Activated CD8-positive, alpha-beta memory T cell treated with anti-CD3 and anti-CD28 coated beads, Interleukin-2, amount 10 ng/mL, durations not matched to agents 7 days and 5 days (primary cell): ENCODE measurements at regions of chr18 and their contacts with region 1.

Region 1: DNA sequence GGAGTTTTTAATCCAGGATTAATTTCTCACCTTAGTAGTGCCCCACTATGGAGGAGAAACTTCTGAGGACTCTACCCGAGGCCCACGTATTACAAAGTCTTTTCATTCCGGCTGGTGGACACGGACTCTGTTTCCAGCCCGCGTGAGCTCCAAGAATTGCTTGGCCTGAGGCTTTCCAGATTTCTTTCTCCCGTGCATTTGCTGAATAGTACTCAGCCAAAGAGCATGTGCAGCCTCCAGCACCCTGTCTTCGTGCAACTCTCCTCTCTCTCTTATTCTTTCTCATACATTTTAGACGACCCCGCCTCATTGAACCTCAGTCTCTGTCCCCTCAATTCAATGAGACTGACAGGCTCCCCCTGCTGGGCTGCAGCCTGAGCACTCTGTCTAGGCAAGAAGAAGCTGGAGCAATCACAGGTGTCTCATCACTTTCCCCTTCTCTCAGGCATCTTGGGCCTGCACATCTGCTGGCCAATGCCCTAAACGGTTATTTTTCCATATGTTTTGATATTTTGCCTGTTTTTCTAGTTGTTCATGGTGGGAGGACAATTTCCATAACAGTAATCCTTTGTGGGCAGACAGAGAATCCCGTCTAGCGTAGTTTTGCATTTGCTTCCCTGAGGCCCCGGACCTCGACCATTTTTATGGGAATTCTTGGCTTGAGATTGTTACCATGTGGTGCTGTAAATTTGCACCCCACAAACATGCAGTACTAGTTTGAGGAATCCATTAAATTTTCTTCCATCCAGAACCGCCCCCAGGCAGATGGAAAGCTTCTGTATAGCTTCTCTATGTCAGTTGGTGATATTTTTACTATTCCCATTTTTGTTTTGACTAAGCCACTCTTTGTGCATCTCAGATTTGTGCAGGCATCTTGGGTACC is 50.1 kb upstream of the LPIN2 start:
- DNase-seq: peak; percentile 88
- ATAC-seq: peak; percentile 45
- H3K4me3 Mint-ChIP-seq: peak overlapping the region; percentile 62
- H3K27ac Mint-ChIP-seq: peak overlapping the region; percentile 100
- H3K4me1 Mint-ChIP-seq: peaks cover 72% of the 10 kb centered on the region
- H3K27me3 Mint-ChIP-seq: no peaks in the 10 kb centered on the region

Region 2: DNA sequence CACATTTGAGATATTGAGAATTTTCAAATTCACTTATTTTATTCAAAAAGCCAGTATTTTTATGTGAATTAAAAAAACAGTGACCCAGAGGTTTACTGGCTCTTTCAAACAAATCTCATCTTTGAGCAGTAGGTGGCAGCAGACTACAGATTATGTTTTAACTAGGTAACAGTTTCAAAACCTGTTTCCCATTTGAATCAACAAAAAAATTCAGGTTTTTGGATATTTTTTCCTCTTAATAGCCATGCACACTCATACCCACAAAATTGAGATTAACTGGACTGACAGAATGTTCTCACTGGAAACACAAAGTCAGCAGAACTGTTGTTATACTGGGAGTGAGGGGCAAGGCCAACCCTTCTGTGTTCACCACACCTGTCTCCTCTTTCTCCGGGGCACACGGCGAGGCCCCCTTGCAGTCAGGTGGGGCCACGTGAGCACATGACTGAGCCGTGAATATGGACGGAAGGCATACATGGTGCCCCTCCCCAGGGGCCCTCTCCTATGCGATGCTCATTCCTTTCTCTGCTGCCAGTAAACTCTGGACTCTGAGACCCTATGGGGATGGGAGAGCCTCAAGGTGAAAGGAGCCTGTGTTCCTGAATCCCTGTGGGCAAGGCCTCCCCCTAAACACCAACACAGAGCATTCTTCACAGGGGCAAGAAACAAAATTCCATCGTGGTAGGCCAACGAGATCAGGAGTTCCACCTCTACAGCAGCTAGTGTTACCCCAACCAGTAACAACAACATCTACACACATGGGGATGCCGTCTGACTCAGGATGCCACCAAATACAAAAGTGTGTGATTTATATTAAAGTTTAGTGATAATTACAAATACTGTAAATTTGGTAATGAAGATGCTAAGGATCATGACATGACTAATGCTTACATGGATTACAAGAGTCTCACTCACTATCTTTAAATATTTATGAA is 130.5 kb before region 1 on chr18:
- CTCF ChIA-PET with region 1: interaction called, 27 read pairs
- DNase-seq: no peak
- ATAC-seq: peak; percentile 60
- H3K4me3 Mint-ChIP-seq: peak overlapping the region; percentile 10
- H3K27ac Mint-ChIP-seq: peak overlapping the region; percentile 76
- H3K4me1 Mint-ChIP-seq: peaks cover 29% of the 10 kb centered on the region
- H3K27me3 Mint-ChIP-seq: no peaks in the 10 kb centered on the region

Region 3: DNA sequence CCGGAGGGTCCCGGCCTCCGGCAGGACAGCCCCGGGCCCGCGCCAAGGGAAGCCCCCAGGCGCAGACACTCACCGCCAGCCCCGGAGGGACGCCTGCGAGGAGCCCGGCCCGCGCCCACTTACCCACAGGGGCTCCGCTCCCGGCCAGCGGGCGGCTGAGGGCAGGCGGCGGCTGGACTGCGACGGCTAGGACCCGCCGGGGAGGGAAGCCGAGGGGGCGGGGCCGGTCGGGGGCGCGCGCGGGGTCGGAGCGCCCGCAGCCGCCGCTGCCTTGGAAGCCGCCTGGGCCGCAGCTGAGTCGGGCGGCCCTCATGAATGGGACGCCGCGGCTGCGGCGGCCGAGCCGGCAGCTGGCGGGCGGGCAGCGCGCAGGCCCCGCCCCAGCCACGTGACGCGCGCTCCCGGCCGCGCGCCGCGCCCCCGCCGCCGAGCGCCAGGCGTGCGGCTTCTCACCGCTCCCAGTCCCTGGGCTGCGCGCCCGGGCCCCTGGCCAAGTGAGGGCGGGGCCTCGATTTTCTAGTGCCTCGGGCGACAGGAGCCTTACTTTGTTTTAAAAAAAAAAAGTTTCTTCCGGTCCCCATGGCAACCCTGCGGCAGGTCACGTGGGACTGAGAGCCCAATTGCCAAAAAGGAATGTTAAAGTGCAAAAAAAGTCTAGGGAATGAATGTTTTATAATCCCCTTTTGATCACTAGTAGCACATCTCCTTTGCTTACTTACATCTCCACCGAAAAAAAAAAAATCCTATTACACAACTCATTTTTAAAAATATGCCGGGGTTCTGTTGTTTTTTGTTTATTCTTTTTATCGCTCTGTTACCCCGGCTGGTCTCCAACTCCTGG is 49.9 kb before region 1 on chr18 and contains the start of gene LPIN2:
- CTCF ChIA-PET with region 1: interaction called, 17 read pairs
- DNase-seq: peak; percentile 98
- ATAC-seq: peak; percentile 94
- H3K4me3 Mint-ChIP-seq: peak within 1 kb of the TSS; percentile 88
- H3K27ac Mint-ChIP-seq: peak within 1 kb of the TSS; percentile 90
- H3K4me1 Mint-ChIP-seq: peaks cover 59% of the 10 kb centered on the region
- H3K27me3 Mint-ChIP-seq: no peaks in the 10 kb centered on the region
- total RNA-seq, gene LPIN2: 77.6 to 78.4 TPM

Region 4: DNA sequence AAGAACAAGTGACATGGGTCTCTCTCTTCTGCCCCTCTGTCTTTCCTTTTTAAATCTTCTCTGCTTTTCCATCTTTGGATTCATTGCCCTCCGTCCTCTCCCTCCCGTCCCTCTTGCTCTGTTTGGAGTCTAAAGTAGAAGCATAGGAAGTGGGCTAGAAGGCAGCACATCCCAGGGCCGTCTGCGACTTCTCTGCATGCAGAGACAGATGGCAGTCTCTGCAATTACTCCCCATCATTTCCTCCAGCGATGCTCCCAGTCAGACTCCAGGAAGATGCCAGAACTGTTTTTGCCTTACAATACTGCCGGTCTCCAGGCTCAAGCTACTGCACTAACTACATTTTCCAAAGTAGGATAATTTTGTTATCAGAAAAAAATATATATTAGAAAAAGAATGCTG is 14.9 kb before region 1 on chr18:
- CTCF ChIA-PET with region 1: interaction called, 12 read pairs
- DNase-seq: no peak
- ATAC-seq: no peak
- H3K4me3 Mint-ChIP-seq: no peak overlapping the region
- H3K27ac Mint-ChIP-seq: no peak overlapping the region
- H3K4me1 Mint-ChIP-seq: peaks cover 29% of the 10 kb centered on the region
- H3K27me3 Mint-ChIP-seq: no peaks in the 10 kb centered on the region

Region 5: GRCh38 chr18:3097082-3097481 is 34.0 kb after region 1 on chr18:
- CTCF ChIA-PET with region 1: interaction called, 10 read pairs
- DNase-seq: no peak
- ATAC-seq: peak; percentile 60
- H3K4me3 Mint-ChIP-seq: no peak overlapping the region
- H3K27ac Mint-ChIP-seq: no peak overlapping the region
- H3K4me1 Mint-ChIP-seq: peaks cover 12% of the 10 kb centered on the region
- H3K27me3 Mint-ChIP-seq: no peaks in the 10 kb centered on the region

Region 6: DNA sequence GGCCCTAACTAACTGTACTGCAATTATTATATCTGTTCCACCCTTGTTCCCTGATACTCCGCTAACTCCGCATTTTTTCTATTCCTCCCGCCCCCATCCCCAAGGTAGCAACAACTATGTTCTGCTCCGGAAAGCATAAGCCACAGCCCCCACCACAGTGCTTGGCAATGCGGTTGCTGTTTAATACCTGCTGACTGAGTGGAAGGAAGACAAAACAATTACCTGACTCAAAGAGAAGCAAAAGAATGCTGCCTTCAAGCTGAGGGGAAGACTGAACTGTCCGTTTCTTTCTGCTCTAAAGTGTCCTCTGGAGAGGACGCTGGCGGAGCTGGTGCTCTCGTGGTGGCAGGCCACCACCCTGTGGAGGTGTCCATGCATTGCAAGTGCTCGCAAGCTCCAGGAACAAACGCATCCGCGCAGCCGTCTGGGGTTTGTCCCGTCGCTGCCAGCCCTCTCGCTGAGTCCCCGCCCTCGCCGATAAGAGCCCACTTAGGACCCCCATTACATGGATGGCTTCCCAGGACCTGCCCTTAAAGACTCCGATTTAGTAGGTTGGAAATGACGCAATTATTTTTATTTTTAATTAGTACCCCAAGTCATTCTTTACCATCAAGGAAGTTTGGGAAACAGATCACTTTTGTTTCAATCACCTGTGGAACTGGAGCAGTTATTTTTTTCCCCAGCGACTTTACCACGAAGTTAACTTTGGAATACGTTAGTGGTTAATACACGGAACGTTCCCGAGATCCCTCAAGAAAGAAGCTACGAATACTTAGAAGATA is 183.0 kb after region 1 on chr18:
- CTCF ChIA-PET with region 1: interaction called, 30 read pairs
- DNase-seq: peak; percentile 90
- ATAC-seq: peak; percentile 56
- H3K4me3 Mint-ChIP-seq: peak overlapping the region; percentile 92
- H3K27ac Mint-ChIP-seq: peak overlapping the region; percentile 99
- H3K4me1 Mint-ChIP-seq: peaks cover 24% of the 10 kb centered on the region
- H3K27me3 Mint-ChIP-seq: peaks cover 4% of the 10 kb centered on the region